ENCODE measurements at regions of chr17 and their contacts with region 1.

Region 1: GRCh38 chr17:4220655-4221054 is 43.1 kb downstream of the ANKFY1 start:
- DNase-seq: peak in 1 of 2 donors; percentile 54
- H3K4me3 ChIP-seq: no peak overlapping the region
- CTCF ChIP-seq: no peak
- POLR2A ChIP-seq: no peak

Region 2: GRCh38 chr17:4304417-4305027 is 83.9 kb after region 1 on chr17:
- intact Hi-C with region 1: loop called (anchors 10 kb)
- DNase-seq: no peak
- H3K4me3 ChIP-seq: no peak overlapping the region
- CTCF ChIP-seq: no peak
- POLR2A ChIP-seq: no peak

Region 3: GRCh38 chr17:4362141-4362540 is 141.5 kb after region 1 on chr17:
- intact Hi-C with region 1: loop called (anchors 5 kb)
- DNase-seq: no peak
- H3K4me3 ChIP-seq: no peak overlapping the region
- CTCF ChIP-seq: no peak
- POLR2A ChIP-seq: no peak

Region 4: DNA sequence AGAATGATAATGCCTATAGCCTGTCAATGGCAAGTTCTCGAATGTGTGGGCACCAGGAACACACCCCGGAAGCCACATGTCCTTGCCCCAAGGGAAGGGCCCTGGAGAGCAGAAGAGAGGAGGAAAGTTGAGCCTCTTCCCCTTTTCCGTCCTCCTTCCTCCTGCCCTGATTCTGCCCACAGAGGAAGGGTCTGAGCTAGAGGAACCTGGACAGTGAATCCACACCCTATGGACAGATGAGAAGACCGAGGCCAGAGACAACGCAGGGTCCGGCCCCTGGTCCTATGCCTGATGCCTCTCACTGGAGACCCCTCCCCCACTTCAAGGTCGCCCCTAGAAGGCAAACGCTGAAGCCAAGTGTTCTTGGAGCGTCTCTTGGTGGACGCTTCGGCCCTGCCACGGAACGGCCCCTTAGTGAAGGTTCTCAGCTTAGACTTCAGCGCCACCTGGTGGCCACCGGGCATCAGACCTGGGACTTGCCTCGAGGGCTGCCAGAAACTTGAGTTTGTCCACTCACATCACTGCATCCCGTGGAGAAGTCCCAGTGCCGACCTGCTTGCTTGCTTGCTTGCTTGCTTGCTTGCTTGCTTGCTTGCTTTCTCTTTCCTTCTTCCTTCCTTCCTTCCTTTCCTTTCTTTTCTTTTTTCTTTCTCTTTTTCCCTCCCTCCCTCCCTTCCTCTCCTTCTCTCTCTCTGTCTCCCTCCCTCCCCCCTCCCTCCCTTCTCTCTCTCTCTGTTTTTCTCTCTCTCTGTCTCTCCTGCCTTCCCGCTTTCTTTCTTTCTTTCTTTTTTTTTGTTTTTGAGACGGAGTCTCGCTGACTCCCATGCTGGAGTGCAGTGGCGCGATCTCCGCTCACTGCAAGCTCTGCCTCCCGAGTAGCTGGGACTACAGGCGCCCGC is 192.5 kb after region 1 on chr17:
- intact Hi-C with region 1: loop called (anchors 5 kb)
- DNase-seq: peak; percentile 85 to 98
- H3K4me3 ChIP-seq: no peak overlapping the region
- CTCF ChIP-seq: peak in 1 of 3 donors; percentile 69
- POLR2A ChIP-seq: no peak

Region 5: GRCh38 chr17:4759776-4760236 is 539.2 kb after region 1 on chr17:
- intact Hi-C with region 1: no loop called
- DNase-seq: no peak
- H3K4me3 ChIP-seq: no peak overlapping the region
- CTCF ChIP-seq: peak in 1 of 3 donors; percentile 8
- POLR2A ChIP-seq: no peak

Measured in lower leg skin (tissue), 4 donors.